Motor neuron (in vitro differentiated cells): ENCODE measurements at regions of chr2 and their contacts with region 1.

Region 1: DNA sequence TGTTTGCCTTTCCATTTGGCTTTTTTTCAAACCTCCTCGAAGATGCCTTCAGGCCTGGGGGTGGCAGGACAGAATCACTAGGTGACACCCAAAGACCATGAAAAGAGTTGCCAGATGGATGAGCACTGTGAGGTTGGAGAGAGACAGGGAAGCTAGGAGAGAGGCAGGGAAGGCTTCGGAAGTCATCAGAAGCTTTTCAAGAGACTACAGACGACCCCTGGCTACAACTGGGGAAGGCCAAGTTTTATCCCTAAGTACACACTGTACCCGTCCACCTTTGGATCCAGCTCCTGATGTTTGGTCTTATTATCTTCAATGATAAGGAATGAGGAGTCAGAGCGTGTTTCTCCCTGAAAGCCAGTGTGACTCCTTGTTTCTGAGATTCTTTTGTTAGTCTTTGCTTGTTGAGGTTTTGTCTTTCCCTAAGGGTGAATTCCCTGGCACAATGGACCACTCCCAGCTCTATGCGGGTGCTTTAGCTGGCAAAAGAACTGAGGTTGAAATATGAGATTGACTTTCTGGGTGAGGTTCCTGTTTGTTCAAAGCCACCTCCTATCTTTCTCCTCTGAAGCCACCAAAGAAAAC is 33.4 kb upstream of the SLC9A2 start:
- ATAC-seq: peak in 3 of 8 experiments; percentile 52 to 93 (median 69)
- H3K4me3 ChIP-seq: no peak overlapping the region
- H3K27ac ChIP-seq: no peak overlapping the region
- H3K4me1 ChIP-seq: no peaks in the 10 kb centered on the region

Region 2: DNA sequence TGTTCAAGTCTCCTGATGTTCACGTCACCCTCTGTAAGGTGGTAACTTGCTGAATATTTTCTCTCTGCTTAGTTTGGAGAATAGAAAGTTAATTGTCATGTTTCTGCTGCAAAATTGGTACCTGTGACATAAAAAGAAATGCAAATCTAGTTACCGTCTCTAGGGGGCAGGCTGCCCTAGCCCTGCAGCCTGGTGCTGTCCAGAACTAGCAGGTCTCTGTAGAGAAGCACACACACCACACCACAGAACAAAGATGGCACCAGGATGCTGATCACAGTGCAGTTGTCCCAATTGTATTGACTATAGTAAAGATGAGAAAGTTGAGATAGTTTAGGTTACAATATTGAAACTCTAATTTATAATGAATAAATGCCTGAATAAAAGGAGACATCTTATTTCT is 65.9 kb before region 1 on chr2:
- in situ Hi-C with region 1: loop called in 1 of 9 experiments (anchors 10 kb)
- ATAC-seq: peak in 4 of 8 experiments; percentile 30 to 76 (median 70)
- H3K4me3 ChIP-seq: no peak overlapping the region
- H3K27ac ChIP-seq: no peak overlapping the region
- H3K4me1 ChIP-seq: peaks cover 2 to 3% of the 10 kb centered on the region in 2 donors

Region 3: GRCh38 chr2:102773149-102773705 is 187.3 kb after region 1 on chr2:
- in situ Hi-C with region 1: no loop called
- ATAC-seq: no peak
- H3K4me3 ChIP-seq: no peak overlapping the region
- H3K27ac ChIP-seq: no peak overlapping the region
- H3K4me1 ChIP-seq: no peaks in the 10 kb centered on the region

Region 4: GRCh38 chr2:102983786-102984185 is 397.8 kb after region 1 on chr2:
- in situ Hi-C with region 1: no loop called
- ATAC-seq: no peak
- H3K4me3 ChIP-seq: no peak overlapping the region
- H3K27ac ChIP-seq: no peak overlapping the region
- H3K4me1 ChIP-seq: no peaks in the 10 kb centered on the region